Pancreas (tissue), 10 donors: ENCODE measurements at regions of chr14 and their contacts with region 1.

Region 1: DNA sequence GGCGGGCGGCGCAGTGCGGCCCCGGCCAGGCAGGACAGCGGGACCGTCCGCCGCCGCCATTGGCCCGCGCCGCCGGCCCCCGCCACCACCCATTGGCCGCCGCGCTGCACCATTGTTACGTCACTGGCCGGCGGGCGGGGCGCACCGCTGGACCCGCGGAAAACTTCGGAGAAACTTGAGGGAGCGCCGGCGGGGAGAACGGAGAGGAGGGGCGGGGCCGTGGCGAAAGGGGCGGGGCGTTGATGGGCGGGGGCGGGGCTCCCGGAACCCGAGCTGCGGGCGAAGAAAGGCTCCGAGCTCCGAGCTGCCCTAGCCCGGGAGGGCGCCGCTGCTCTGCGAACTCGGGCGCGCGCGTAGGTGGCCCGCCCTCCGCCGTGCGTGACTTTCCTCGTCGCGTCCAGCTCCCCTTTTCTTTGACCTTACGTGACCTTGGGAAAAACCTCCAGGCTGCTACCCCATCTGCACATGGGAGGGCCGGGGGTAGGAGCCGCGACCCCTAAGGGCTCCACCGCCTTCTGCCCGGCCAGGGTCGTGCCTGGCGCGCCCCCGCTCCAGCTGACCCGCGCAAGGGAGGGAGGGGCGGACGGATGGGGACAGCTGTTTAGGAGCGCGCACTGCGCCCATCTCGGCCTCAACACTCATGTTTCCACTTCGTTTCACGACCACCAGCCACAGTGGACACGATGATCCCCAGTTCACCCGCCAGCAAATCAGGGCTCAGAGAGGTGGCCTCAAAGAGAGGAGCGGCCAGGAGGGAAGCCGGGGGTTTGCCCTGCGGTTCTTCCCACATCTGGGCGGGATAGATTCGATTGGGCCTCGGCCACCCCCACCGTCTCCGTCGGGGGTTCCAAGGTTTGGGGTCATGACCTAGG is at the start of gene ANKRD9:
- DNase-seq: peak; percentile 93 to 98 (median 96)
- ATAC-seq: peak; percentile 89 to 92 (median 90)
- H3K4me3 ChIP-seq: peak within 1 kb of the TSS; percentile 52 to 68 (median 58)
- H3K27ac ChIP-seq: peak within 1 kb of the TSS; percentile 60 to 78 (median 72)
- H3K4me1 ChIP-seq: peaks cover 0 to 3% (median 0%) of the 10 kb centered on the region in 3 donors
- H3K27me3 ChIP-seq: no peaks in the 10 kb centered on the region
- CTCF ChIP-seq: no peak
- total RNA-seq, gene ANKRD9: 7.6 to 14.4 (median 9.4) TPM

Region 2: DNA sequence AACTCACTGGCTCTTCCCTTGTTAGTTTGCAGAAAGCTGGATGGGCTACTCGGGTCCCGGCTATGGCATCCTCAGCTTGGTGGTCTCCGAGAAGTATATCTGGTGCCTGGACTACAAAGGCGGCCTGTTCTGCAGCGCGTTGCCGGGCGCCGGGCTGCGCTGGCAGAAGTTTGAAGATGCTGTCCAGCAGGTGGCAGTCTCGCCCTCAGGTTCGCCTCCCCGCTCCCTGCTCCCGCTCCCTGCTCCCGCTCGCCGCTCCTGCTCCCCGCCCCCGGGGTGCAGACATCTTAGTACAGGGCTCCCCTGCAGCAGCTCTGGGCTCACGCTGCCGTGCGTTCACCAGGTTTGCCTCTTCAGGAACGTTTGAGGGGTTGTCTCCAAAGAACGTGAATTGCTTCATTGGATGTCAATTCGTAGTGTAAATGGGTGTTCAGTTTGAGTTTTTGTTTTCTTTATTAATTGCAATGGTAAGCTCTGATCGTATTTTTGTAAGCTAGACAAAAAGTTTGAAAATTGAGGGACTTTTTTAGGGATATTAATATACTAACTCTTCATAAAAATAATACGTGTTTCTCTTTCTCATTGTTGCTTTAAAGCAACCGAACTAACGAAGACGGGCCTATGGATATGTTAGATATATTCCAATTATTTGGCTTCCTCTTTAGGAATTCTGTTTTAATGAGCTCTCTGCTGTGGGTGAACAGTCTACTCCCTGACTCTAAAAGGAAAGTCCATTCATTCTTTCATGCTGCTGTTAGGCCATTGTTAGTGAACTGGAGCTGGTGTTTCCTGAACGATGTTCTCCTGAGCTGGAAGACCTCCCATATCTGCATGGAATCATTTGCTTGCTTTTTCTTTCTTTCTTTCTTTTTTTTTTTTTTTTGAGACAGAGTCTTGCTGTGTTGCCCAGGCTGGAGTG is 71.7 kb before region 1 on chr14:
- intact Hi-C with region 1: loop called in 1 of 3 experiments (anchors 5 kb)
- DNase-seq: peak; percentile 70 to 94 (median 86)
- ATAC-seq: peak; percentile 97 to 100 (median 98)
- H3K4me3 ChIP-seq: peak overlapping the region in 2 of 4 donors; percentile 24 to 31
- H3K27ac ChIP-seq: no peak overlapping the region
- H3K4me1 ChIP-seq: no peaks in the 10 kb centered on the region
- H3K27me3 ChIP-seq: no peaks in the 10 kb centered on the region
- CTCF ChIP-seq: peak; percentile 50 to 71 (median 66)

Region 3: GRCh38 chr14:102445066-102445465 is 64.9 kb before region 1 on chr14:
- intact Hi-C with region 1: loop called in 1 of 3 experiments (anchors 5 kb)
- DNase-seq: no peak
- ATAC-seq: no peak
- H3K4me3 ChIP-seq: no peak overlapping the region
- H3K27ac ChIP-seq: no peak overlapping the region
- H3K4me1 ChIP-seq: no peaks in the 10 kb centered on the region
- H3K27me3 ChIP-seq: no peaks in the 10 kb centered on the region
- CTCF ChIP-seq: no peak

Region 4: DNA sequence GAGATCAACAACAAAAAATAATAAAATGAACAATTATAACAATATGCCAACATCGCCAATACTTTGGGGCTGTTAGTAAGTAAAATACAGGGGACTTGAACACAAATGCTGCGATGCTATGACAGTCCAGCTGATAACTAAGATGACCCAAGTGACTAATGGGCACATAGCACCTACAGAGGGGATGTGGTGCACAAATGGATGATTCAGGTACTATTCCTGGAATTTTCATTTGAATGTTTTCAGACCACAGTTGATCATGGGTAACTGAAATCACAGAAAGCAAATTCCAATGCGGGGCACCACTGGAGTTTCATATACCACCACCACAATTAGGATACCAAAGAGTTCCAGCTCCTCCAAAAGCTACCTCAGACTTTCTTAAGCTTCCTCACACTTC is 165.4 kb after region 1 on chr14:
- intact Hi-C with region 1: no loop called
- DNase-seq: no peak
- ATAC-seq: no peak
- H3K4me3 ChIP-seq: no peak overlapping the region
- H3K27ac ChIP-seq: no peak overlapping the region
- H3K4me1 ChIP-seq: no peaks in the 10 kb centered on the region
- H3K27me3 ChIP-seq: no peaks in the 10 kb centered on the region
- CTCF ChIP-seq: no peak